CD4-positive, alpha-beta memory T cell (primary cell): ENCODE measurements at regions of chrX and their contacts with region 1.

Region 1: DNA sequence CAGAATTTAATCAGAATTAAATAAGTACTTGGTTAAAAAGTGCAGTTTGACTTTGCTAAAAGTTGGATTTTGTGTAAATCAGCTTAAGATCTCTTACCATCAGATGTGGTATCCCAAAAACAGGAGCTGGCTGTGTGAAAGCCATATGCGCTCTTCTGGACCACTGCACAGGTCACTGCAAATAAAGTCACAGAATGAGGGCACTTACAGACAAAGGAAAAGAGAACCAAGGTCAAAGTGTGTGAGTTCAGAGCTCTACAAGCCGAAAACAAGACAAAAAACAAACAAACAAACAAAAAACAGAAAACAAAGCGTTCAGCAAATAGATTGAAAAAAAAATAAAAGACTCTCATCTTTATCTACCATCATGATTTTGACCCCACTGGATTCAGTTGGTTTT is 6.4 kb downstream of the DYNLT3 start:
- DNase-seq: no peak
- H3K4me3 ChIP-seq: no peak overlapping the region
- H3K4me3 Mint-ChIP-seq: no peak overlapping the region
- H3K27ac ChIP-seq: no peak overlapping the region
- H3K27ac Mint-ChIP-seq: peak overlapping the region in 1 of 7 donors; percentile 18
- H3K4me1 ChIP-seq: peaks cover 8% of the 10 kb centered on the region
- H3K4me1 Mint-ChIP-seq: peaks cover 11 to 20% (median 16%) of the 10 kb centered on the region in 4 donors
- H3K27me3 ChIP-seq: no peaks in the 10 kb centered on the region
- H3K27me3 Mint-ChIP-seq: no peaks in the 10 kb centered on the region

Region 2: GRCh38 chrX:37745354-37745753 is 95.6 kb before region 1 on chrX:
- CTCF ChIA-PET with region 1: interaction called, 12 read pairs
- POLR2A ChIA-PET with region 1: no interaction called
- intact Hi-C with region 1: no loop called
- DNase-seq: peak; percentile 67 to 73 (median 71)
- H3K4me3 ChIP-seq: no peak overlapping the region
- H3K4me3 Mint-ChIP-seq: no peak overlapping the region
- H3K27ac ChIP-seq: no peak overlapping the region
- H3K27ac Mint-ChIP-seq: peak overlapping the region in 3 of 7 donors; percentile 4 to 61 (median 29)
- H3K4me1 ChIP-seq: peaks cover 11% of the 10 kb centered on the region
- H3K4me1 Mint-ChIP-seq: peaks cover 7 to 13% (median 11%) of the 10 kb centered on the region in 4 donors
- H3K27me3 ChIP-seq: no peaks in the 10 kb centered on the region
- H3K27me3 Mint-ChIP-seq: no peaks in the 10 kb centered on the region

Region 3: DNA sequence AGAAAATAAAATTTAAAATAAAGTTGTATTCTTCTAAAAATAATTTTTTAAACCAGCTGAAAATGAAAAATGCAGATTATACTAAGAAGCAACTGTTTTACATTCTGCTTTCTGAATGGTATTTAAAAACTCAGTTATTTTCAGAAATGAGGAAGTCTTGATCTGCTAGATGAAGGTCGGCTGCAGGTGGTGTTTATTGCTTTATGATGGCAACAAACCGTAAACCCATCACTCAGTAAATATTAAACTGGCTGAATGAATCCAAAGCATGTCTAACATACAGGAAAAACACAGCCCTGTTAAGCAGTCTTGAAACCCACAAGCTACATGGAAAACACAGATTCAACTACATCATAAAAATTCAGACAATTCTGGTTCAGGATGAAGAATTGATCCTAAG is 22.9 kb before region 1 on chrX:
- CTCF ChIA-PET with region 1: no interaction called
- POLR2A ChIA-PET with region 1: no interaction called
- intact Hi-C with region 1: no loop called
- DNase-seq: no peak
- H3K4me3 ChIP-seq: no peak overlapping the region
- H3K4me3 Mint-ChIP-seq: no peak overlapping the region
- H3K27ac ChIP-seq: no peak overlapping the region
- H3K27ac Mint-ChIP-seq: no peak overlapping the region
- H3K4me1 ChIP-seq: no peaks in the 10 kb centered on the region
- H3K4me1 Mint-ChIP-seq: peaks cover 0 to 4% (median under 1%) of the 10 kb centered on the region in 4 donors
- H3K27me3 ChIP-seq: no peaks in the 10 kb centered on the region
- H3K27me3 Mint-ChIP-seq: no peaks in the 10 kb centered on the region

Region 4: GRCh38 chrX:37854148-37854547 is 13.2 kb after region 1 on chrX:
- CTCF ChIA-PET with region 1: no interaction called
- POLR2A ChIA-PET with region 1: no interaction called
- intact Hi-C with region 1: no loop called
- DNase-seq: no peak
- H3K4me3 ChIP-seq: no peak overlapping the region
- H3K4me3 Mint-ChIP-seq: no peak overlapping the region
- H3K27ac ChIP-seq: no peak overlapping the region
- H3K27ac Mint-ChIP-seq: no peak overlapping the region
- H3K4me1 ChIP-seq: no peaks in the 10 kb centered on the region
- H3K4me1 Mint-ChIP-seq: no peaks in the 10 kb centered on the region
- H3K27me3 ChIP-seq: no peaks in the 10 kb centered on the region
- H3K27me3 Mint-ChIP-seq: peaks cover 0 to 5% of the 10 kb centered on the region in 2 donors

Region 5: GRCh38 chrX:37905436-37906147 is 64.7 kb after region 1 on chrX:
- CTCF ChIA-PET with region 1: no interaction called
- POLR2A ChIA-PET with region 1: no interaction called
- intact Hi-C with region 1: no loop called
- DNase-seq: peak in 2 of 5 donors; percentile 2 to 5
- H3K4me3 ChIP-seq: no peak overlapping the region
- H3K4me3 Mint-ChIP-seq: peak overlapping the region in 2 of 8 donors; percentile 9 to 58
- H3K27ac ChIP-seq: no peak overlapping the region
- H3K27ac Mint-ChIP-seq: no peak overlapping the region
- H3K4me1 ChIP-seq: no peaks in the 10 kb centered on the region
- H3K4me1 Mint-ChIP-seq: no peaks in the 10 kb centered on the region
- H3K27me3 ChIP-seq: no peaks in the 10 kb centered on the region
- H3K27me3 Mint-ChIP-seq: peaks cover 9 to 18% of the 10 kb centered on the region in 2 donors